ENCODE measurements at regions of chr19 and their contacts with region 1.

Region 1: DNA sequence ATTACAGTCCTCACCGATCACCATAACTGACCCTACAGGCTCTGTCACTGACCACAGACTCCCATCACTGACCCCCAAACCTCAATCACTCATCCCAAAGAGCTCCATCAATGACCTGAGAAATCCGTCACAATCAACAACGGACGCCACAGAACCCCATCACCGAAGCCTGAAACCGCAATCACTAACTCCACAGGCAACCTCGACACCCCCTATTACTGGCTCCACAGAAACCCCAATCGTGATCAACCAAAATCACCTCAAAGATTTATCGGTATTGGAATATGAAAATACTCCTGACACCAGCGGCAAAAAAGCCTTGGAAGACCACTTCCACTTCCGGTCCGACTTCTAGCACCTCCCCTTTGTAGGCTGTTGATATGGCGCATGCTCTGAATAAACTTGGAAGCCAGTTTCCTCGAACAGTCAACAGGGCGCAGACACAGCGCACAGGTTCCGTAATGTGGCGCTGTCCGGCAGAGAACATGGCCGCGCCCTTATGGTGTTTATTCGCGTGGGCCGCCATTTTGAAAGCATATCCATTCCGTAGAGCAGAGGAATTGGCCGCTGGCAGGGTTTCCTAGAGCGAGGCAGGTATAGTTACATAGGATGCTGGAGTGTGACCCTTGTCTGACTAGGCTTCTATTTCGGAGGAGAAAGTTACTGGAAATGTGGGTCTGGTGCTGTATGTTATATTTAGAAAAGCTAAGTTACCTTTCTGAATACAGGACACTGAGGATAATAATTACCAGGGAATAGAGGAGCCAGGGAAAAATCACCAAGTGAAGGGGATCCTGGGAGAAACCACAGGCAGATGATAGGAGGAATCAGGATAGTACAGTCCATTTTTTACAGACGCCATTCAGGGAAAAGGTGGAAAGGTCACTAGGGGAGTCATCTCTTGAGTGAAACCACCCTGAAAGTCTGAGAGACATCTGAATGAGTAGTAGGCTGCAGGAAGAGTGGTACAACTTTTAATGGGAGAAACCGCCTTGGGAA is at the start of gene ZNF585A:
- DNase-seq: peak; percentile 90 to 94 (median 92)
- H3K4me3 ChIP-seq: peak within 1 kb of the TSS; percentile 81 to 82
- H3K4me3 Mint-ChIP-seq: peak within 1 kb of the TSS in 3 of 8 donors; percentile 12 to 51 (median 26)
- H3K27ac ChIP-seq: peak within 1 kb of the TSS; percentile 61
- H3K27ac Mint-ChIP-seq: no peak within 1 kb of the TSS
- H3K4me1 ChIP-seq: peaks cover 17% of the 10 kb centered on the region
- H3K4me1 Mint-ChIP-seq: peaks cover 0 to 2% (median 0%) of the 10 kb centered on the region in 4 donors
- H3K27me3 ChIP-seq: no peaks in the 10 kb centered on the region
- H3K27me3 Mint-ChIP-seq: no peaks in the 10 kb centered on the region
- total RNA-seq, gene ZNF585A: 16.5 to 25.4 TPM

Region 2: DNA sequence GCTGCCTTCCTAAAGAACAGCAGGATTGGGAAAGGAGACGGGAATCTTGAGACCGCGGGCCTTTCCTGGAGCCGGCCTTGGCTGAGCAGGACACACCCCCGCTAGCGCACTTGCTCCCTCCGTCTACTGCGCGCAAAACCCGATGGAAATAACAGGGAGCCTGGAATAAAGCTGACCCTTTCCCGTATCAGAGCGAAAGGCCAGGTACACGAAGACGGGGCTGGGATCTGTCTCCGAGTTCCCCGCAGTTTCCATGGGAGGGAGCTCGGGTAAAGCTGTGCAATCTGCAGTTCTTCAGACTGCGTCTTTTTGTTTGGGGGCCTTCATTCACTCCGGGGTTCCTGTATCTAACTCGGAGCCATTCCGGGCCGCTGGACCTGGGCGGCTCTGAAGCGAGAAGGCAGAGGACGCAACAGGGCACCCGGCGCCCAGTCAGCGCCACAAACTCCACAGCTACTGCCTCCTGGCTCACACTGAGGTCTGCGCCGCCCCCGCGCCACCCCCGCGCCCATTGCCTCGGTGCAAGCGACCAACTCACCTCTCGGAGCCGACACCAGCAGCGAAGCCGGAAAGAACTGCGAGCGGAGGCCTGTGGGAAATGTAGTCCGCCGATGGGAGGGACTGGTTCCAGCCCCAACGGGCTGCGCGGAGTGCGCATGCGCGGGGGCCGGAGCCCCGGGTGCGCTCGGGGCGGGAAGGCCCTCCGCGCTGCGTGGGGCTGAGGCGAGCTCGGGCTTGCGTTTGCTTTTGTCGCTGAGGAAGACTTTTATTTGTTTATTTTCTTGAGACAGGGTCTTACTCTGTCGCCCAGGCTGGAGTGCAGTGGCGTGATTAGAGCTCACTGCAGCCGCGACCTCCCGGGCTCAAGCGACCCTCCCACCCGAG is 793.8 kb before region 1 on chr19 and contains the start of gene ZFP14:
- CTCF ChIA-PET with region 1: no interaction called
- POLR2A ChIA-PET with region 1: no interaction called
- intact Hi-C with region 1: loop called (anchors 1 kb)
- DNase-seq: peak; percentile 92 to 96 (median 95)
- H3K4me3 ChIP-seq: peak within 1 kb of the TSS; percentile 76 to 87
- H3K4me3 Mint-ChIP-seq: peak within 1 kb of the TSS; percentile 87 to 96 (median 94)
- H3K27ac ChIP-seq: peak within 1 kb of the TSS; percentile 76
- H3K27ac Mint-ChIP-seq: peak within 1 kb of the TSS; percentile 81 to 97 (median 93)
- H3K4me1 ChIP-seq: peaks cover 18% of the 10 kb centered on the region
- H3K4me1 Mint-ChIP-seq: peaks cover 13 to 34% (median 18%) of the 10 kb centered on the region in 4 donors
- H3K27me3 ChIP-seq: no peaks in the 10 kb centered on the region
- H3K27me3 Mint-ChIP-seq: no peaks in the 10 kb centered on the region
- total RNA-seq, gene ZFP14: 20.7 to 21.2 TPM

Region 3: DNA sequence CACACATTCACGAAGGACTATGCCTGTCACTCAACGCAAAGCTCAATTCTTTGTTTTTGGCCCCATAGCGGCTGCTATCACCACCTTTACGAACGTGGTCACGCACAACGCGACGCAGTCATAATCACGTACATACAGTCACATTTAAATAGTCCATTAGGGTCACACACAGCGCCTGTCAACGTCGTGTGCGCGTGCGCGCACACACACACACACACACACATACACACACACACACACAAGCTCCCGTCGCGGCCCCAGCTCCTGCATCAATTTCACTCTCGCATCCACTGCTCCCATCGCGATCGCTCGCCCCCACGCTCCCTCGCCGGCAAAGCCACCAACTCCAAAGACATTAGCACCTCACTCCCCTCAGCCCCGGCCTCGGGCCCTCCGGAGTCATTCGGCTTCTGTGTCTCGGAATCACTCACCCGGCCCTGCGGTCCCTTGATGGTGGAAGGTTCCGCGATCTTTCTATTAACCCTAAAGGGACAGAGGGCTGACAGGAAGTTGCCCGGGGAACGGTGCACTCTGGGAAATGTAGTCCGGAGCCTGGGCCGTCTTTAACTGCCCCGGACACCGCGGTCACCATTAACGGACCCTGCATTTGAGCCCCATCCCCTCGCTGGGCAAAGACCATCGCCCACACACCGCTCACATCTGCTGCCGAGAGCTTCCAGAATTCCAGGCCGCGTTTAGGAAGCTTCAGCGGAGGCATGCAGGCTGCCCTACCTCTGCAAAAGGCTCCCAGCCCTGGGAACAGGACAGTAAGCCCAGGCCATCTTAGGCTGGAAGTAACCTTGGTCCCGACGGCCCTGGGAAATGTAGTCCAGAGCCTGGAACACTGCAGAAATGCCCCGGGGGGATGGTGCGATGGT is 334.5 kb before region 1 on chr19 and contains the start of gene ZNF790:
- CTCF ChIA-PET with region 1: no interaction called
- POLR2A ChIA-PET with region 1: no interaction called
- intact Hi-C with region 1: loop called (anchors 1 kb)
- DNase-seq: peak; percentile 88 to 94 (median 91)
- H3K4me3 ChIP-seq: peak within 1 kb of the TSS; percentile 48 to 97
- H3K4me3 Mint-ChIP-seq: peak within 1 kb of the TSS in 4 of 8 donors; percentile 31 to 71 (median 44)
- H3K27ac ChIP-seq: peak within 1 kb of the TSS; percentile 73
- H3K27ac Mint-ChIP-seq: peak within 1 kb of the TSS in 2 of 7 donors; percentile 45 to 54
- H3K4me1 ChIP-seq: peaks cover 18% of the 10 kb centered on the region
- H3K4me1 Mint-ChIP-seq: peaks cover 0 to 13% (median 5%) of the 10 kb centered on the region in 4 donors
- H3K27me3 ChIP-seq: no peaks in the 10 kb centered on the region
- H3K27me3 Mint-ChIP-seq: no peaks in the 10 kb centered on the region
- total RNA-seq, gene ZNF790: 12.4 to 13.4 TPM

Region 4: GRCh38 chr19:36973021-36973843 is 199.4 kb before region 1 on chr19:
- CTCF ChIA-PET with region 1: no interaction called
- POLR2A ChIA-PET with region 1: no interaction called
- intact Hi-C with region 1: loop called (anchors 1 kb)
- DNase-seq: peak; percentile 76 to 85 (median 77)
- H3K4me3 ChIP-seq: peak overlapping the region; percentile 80 to 86
- H3K4me3 Mint-ChIP-seq: peak overlapping the region; percentile 91 to 98 (median 96)
- H3K27ac ChIP-seq: peak overlapping the region; percentile 68
- H3K27ac Mint-ChIP-seq: peak overlapping the region; percentile 82 to 97 (median 94)
- H3K4me1 ChIP-seq: peaks cover 16% of the 10 kb centered on the region
- H3K4me1 Mint-ChIP-seq: peaks cover 8 to 22% (median 12%) of the 10 kb centered on the region in 4 donors
- H3K27me3 ChIP-seq: no peaks in the 10 kb centered on the region
- H3K27me3 Mint-ChIP-seq: no peaks in the 10 kb centered on the region

Region 5: GRCh38 chr19:37077934-37078725 is 94.5 kb before region 1 on chr19 and contains the start of gene ZNF420:
- CTCF ChIA-PET with region 1: interaction called, 4 read pairs
- POLR2A ChIA-PET with region 1: interaction called, 5 read pairs
- intact Hi-C with region 1: loop called (anchors 1 kb)
- DNase-seq: peak; percentile 85 to 92 (median 87)
- H3K4me3 ChIP-seq: peak within 1 kb of the TSS; percentile 61 to 88
- H3K4me3 Mint-ChIP-seq: peak within 1 kb of the TSS; percentile 90 to 100 (median 98)
- H3K27ac ChIP-seq: peak within 1 kb of the TSS; percentile 73
- H3K27ac Mint-ChIP-seq: peak within 1 kb of the TSS; percentile 85 to 99 (median 95)
- H3K4me1 ChIP-seq: peaks cover 23% of the 10 kb centered on the region
- H3K4me1 Mint-ChIP-seq: peaks cover 22 to 43% (median 27%) of the 10 kb centered on the region in 4 donors
- H3K27me3 ChIP-seq: no peaks in the 10 kb centered on the region
- H3K27me3 Mint-ChIP-seq: no peaks in the 10 kb centered on the region
- total RNA-seq, gene ZNF420: 25.0 to 28.6 TPM

Region 6: DNA sequence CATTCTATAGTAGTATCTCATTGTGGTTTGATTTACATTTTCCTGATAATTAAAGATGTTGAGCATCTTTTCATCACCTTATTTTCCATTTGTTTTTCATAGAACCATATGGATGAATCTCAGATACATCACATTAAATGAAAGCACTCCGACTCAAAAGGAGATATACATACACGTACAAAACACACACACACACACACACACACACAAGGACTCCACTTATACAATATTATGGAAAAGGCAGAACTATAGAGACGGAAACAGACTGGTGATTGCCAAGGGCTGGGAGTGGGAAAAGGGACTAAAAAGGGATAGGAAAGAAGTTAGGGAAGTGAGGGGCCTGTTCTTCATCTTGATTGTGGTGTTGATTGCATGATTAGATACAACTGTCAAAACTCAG is 24.5 kb before region 1 on chr19:
- CTCF ChIA-PET with region 1: no interaction called
- POLR2A ChIA-PET with region 1: no interaction called
- intact Hi-C with region 1: no loop called
- DNase-seq: no peak
- H3K4me3 ChIP-seq: no peak overlapping the region
- H3K4me3 Mint-ChIP-seq: no peak overlapping the region
- H3K27ac ChIP-seq: no peak overlapping the region
- H3K27ac Mint-ChIP-seq: no peak overlapping the region
- H3K4me1 ChIP-seq: no peaks in the 10 kb centered on the region
- H3K4me1 Mint-ChIP-seq: no peaks in the 10 kb centered on the region
- H3K27me3 ChIP-seq: no peaks in the 10 kb centered on the region
- H3K27me3 Mint-ChIP-seq: no peaks in the 10 kb centered on the region

Region 7: GRCh38 chr19:37217855-37218591 is 45.4 kb after region 1 on chr19 and contains the start of gene ZNF383:
- CTCF ChIA-PET with region 1: interaction called, 7 read pairs
- POLR2A ChIA-PET with region 1: interaction called, 15 read pairs
- intact Hi-C with region 1: loop called (anchors 1 kb)
- DNase-seq: peak; percentile 80 to 87 (median 83)
- H3K4me3 ChIP-seq: peak within 1 kb of the TSS; percentile 85 to 99
- H3K4me3 Mint-ChIP-seq: peak within 1 kb of the TSS; percentile 89 to 98 (median 91)
- H3K27ac ChIP-seq: peak within 1 kb of the TSS; percentile 80
- H3K27ac Mint-ChIP-seq: peak within 1 kb of the TSS; percentile 88 to 98 (median 96)
- H3K4me1 ChIP-seq: peaks cover 16% of the 10 kb centered on the region
- H3K4me1 Mint-ChIP-seq: peaks cover 19 to 40% (median 31%) of the 10 kb centered on the region in 4 donors
- H3K27me3 ChIP-seq: no peaks in the 10 kb centered on the region
- H3K27me3 Mint-ChIP-seq: no peaks in the 10 kb centered on the region
- total RNA-seq, gene ZNF383: 32.0 to 34.0 TPM

Region 8: GRCh38 chr19:37346091-37346490 is 173.4 kb after region 1 on chr19:
- CTCF ChIA-PET with region 1: no interaction called
- POLR2A ChIA-PET with region 1: no interaction called
- intact Hi-C with region 1: no loop called
- DNase-seq: no peak
- H3K4me3 ChIP-seq: no peak overlapping the region
- H3K4me3 Mint-ChIP-seq: no peak overlapping the region
- H3K27ac ChIP-seq: no peak overlapping the region
- H3K27ac Mint-ChIP-seq: no peak overlapping the region
- H3K4me1 ChIP-seq: no peaks in the 10 kb centered on the region
- H3K4me1 Mint-ChIP-seq: peaks cover 0 to 6% (median 2%) of the 10 kb centered on the region in 4 donors
- H3K27me3 ChIP-seq: no peaks in the 10 kb centered on the region
- H3K27me3 Mint-ChIP-seq: no peaks in the 10 kb centered on the region